ENCODE measurements at regions of chr1 and their contacts with region 1.

Region 1: GRCh38 chr1:246002725-246003441 is 504.2 kb downstream of the SMYD3 start:
- DNase-seq: peak; percentile 83
- H3K4me3 ChIP-seq: no peak overlapping the region
- H3K27ac ChIP-seq: no peak overlapping the region
- H3K4me1 ChIP-seq: no peaks in the 10 kb centered on the region
- CTCF ChIP-seq: peak; percentile 89

Region 2: DNA sequence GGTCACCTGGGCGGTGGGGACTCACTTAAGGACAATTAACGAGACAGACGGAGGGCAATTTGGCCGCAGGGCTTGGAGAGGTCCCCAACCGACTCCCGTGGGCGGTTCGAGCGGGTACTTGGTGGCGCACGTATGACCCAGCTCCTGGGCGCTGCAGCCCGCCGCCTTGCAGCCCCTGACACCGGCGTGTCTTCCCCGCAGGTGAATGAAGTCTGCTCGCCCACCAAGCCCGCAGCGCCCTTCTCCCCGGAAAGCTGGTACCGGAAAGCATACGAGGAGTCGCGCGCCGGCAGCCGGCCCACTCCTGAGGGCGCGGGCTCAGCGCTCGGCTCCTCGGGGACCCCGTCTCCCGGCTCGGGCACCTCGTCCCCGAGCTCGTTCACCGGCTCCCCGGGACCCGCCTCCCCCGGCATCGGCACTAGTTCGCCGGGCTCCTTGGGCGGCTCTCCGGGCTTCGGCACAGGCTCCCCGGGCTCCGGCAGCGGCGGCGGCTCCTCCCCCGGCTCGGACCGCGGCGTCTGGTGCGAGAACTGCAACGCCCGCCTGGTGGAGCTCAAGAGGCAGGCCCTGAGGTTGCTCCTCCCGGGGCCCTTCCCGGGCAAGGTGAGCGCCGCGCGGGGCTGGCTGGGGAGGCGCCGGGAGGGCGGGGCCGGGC is 846.7 kb before region 1 on chr1:
- CTCF ChIA-PET with region 1: no interaction called
- POLR2A ChIA-PET with region 1: no interaction called
- intact Hi-C with region 1: loop called (anchors 1 kb)
- DNase-seq: peak; percentile 85
- H3K4me3 ChIP-seq: peak overlapping the region; percentile 66
- H3K27ac ChIP-seq: no peak overlapping the region
- H3K4me1 ChIP-seq: peaks cover 7% of the 10 kb centered on the region
- CTCF ChIP-seq: peak; percentile 72

Region 3: GRCh38 chr1:245512980-245513578 is 489.8 kb before region 1 on chr1:
- CTCF ChIA-PET with region 1: no interaction called
- POLR2A ChIA-PET with region 1: no interaction called
- intact Hi-C with region 1: loop called (anchors 10 kb)
- DNase-seq: no peak
- H3K4me3 ChIP-seq: no peak overlapping the region
- H3K27ac ChIP-seq: no peak overlapping the region
- H3K4me1 ChIP-seq: no peaks in the 10 kb centered on the region
- CTCF ChIP-seq: no peak

Region 4: GRCh38 chr1:245641384-245641783 is 361.5 kb before region 1 on chr1:
- CTCF ChIA-PET with region 1: no interaction called
- POLR2A ChIA-PET with region 1: no interaction called
- intact Hi-C with region 1: loop called (anchors 10 kb)
- DNase-seq: no peak
- H3K4me3 ChIP-seq: no peak overlapping the region
- H3K27ac ChIP-seq: no peak overlapping the region
- H3K4me1 ChIP-seq: no peaks in the 10 kb centered on the region
- CTCF ChIP-seq: no peak

Region 5: DNA sequence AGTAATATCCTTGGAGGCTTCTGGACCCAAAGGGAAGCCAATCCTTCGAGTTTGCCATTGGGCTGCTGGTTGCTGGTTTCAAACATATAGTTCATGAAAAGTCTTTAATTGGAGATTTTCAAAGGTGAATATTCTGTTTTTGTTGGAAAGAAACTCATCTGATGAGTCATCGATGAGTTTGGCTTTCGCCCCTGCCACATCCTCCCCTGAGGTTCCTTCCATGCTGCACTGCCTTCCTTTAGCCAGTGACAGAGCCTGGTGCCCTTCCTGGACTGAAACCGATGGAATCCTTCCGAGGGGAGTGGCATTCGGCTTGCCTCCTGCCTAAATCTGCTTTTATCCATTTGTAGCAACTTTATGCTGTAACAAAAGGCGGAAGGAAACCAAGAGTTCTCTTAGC is 298.1 kb before region 1 on chr1:
- CTCF ChIA-PET with region 1: no interaction called
- POLR2A ChIA-PET with region 1: no interaction called
- intact Hi-C with region 1: loop called (anchors 10 kb)
- DNase-seq: no peak
- H3K4me3 ChIP-seq: no peak overlapping the region
- H3K27ac ChIP-seq: no peak overlapping the region
- H3K4me1 ChIP-seq: no peaks in the 10 kb centered on the region
- CTCF ChIP-seq: no peak

Region 6: DNA sequence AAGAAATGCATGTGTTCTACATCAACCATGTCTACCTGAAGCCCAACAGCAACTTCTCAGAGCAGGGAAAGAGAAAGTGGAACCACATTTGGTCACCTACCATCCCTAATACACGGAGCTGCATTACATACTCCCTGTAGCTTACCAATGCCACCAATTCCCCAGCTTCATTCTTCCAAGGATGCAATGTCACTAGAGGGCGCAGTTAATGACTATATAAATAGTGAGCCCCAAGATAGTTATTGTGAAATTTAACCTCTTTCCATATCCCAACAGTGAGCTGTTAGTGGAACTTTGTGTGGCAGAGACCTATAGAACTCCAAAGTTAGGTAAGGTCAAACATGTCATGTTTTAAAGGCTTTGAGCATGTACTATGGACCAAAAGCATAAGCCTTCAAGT is 114.1 kb before region 1 on chr1:
- CTCF ChIA-PET with region 1: interaction called, 4 read pairs
- POLR2A ChIA-PET with region 1: no interaction called
- intact Hi-C with region 1: loop called (anchors 5 kb)
- DNase-seq: peak; percentile 51
- H3K4me3 ChIP-seq: no peak overlapping the region
- H3K27ac ChIP-seq: no peak overlapping the region
- H3K4me1 ChIP-seq: no peaks in the 10 kb centered on the region
- CTCF ChIP-seq: peak; percentile 79

Region 7: DNA sequence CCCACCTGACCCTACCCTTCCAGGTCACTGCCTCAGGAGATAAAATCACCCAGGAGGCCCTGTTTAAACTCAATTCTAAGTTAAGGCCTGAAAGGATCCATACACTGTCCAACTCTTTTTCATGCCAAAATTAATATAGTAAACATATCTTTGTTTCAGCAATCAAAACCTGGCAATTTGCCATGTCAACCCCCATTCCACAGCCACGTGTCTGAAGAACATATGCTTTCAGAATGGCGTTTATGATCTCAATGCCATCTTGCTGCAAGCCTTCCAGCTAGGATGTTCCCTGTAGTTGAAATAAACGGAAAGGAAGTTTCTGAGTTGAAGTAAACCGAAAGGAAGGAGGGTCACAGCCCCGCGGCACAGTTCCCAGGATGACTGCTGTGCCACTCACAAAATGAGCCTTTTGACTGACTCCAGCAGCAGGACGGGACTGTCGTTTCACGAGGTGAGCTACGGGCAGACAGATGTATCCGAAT is 32.2 kb after region 1 on chr1:
- CTCF ChIA-PET with region 1: no interaction called
- POLR2A ChIA-PET with region 1: no interaction called
- intact Hi-C with region 1: no loop called
- DNase-seq: no peak
- H3K4me3 ChIP-seq: no peak overlapping the region
- H3K27ac ChIP-seq: no peak overlapping the region
- H3K4me1 ChIP-seq: no peaks in the 10 kb centered on the region
- CTCF ChIP-seq: no peak

Region 8: GRCh38 chr1:246058466-246058865 is 55.6 kb after region 1 on chr1:
- CTCF ChIA-PET with region 1: no interaction called
- POLR2A ChIA-PET with region 1: no interaction called
- intact Hi-C with region 1: no loop called
- DNase-seq: no peak
- H3K4me3 ChIP-seq: no peak overlapping the region
- H3K27ac ChIP-seq: no peak overlapping the region
- H3K4me1 ChIP-seq: no peaks in the 10 kb centered on the region
- CTCF ChIP-seq: no peak

Region 9: DNA sequence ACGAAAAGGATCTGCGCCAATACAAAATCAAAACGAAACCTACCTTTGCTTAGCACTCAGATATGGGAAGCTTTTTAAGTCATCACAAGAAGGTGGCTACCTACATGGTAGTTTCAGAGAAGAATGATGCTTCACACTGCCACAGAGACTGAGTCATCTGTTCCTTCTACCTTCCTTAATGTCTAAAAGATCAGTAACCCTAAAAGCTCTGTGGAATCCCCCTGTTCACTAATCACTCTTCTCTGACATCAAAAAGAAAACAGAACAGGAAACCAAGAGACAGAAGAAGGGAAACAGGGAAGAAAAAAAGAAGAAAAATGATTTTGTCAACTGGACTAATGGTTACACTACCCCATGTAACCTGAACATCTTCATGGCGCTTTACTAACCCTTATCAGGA is 327.0 kb after region 1 on chr1:
- CTCF ChIA-PET with region 1: no interaction called
- POLR2A ChIA-PET with region 1: no interaction called
- intact Hi-C with region 1: no loop called
- DNase-seq: no peak
- H3K4me3 ChIP-seq: no peak overlapping the region
- H3K27ac ChIP-seq: no peak overlapping the region
- H3K4me1 ChIP-seq: peaks cover 9% of the 10 kb centered on the region
- CTCF ChIP-seq: no peak

Measured in OCI-LY7 (cell line).